Naive thymus-derived CD4-positive, alpha-beta T cell (primary cell): ENCODE measurements at regions of chr10 and their contacts with region 1.

Region 1: DNA sequence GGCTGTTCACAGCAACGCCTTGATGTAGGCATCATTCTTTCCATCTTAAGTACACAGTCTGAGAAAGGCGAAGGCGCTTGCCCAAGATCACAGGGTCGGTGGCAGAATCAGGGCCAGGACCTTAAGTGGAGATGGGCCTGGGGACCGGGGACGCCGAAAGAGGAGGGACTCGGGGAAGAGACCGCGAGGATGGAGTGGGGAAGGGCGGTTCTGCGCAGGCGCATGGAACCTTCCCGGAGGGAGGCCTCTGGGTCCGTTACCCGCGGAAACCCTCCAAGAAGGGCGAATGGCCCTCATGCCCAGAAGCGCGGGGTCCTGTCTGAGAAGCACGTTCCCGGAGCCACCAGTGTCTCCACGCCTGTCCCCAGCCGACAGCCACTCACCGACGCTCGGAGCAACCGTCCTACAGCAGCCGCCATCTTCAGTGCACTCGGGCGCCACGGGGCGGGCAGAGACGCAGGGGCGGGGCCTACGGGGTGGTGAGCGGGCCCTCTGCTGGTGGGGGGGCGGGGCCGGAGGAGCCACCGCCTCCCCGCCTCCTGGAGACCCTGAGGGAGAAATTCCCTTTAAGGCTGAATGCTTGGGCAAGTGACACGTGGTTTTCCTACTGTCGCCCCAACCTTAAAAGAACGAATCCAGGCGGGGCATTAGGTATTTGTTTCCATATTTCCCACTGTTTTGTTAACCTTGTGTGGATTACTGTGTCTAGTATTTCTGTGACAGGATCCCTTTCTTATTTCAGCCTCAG is at the start of gene PRDX3:
- DNase-seq: peak; percentile 81 to 96 (median 89)
- ATAC-seq: peak; percentile 100
- H3K4me3 ChIP-seq: peak within 1 kb of the TSS; percentile 97
- H3K4me3 Mint-ChIP-seq: peak within 1 kb of the TSS; percentile 91 to 99 (median 96)
- H3K27ac ChIP-seq: peak within 1 kb of the TSS; percentile 79
- H3K27ac Mint-ChIP-seq: peak within 1 kb of the TSS; percentile 86 to 98 (median 93)
- H3K4me1 ChIP-seq: peaks cover 7 to 13% of the 10 kb centered on the region in 2 donors
- H3K4me1 Mint-ChIP-seq: peaks cover 13 to 48% (median 36%) of the 10 kb centered on the region in 7 donors
- H3K27me3 ChIP-seq: no peaks in the 10 kb centered on the region
- H3K27me3 Mint-ChIP-seq: no peaks in the 10 kb centered on the region
- total RNA-seq, gene PRDX3: 11.7 to 120 (median 35.4) TPM

Region 2: GRCh38 chr10:119090968-119091367 is 87.6 kb before region 1 on chr10:
- CTCF ChIA-PET with region 1: no interaction called
- POLR2A ChIA-PET with region 1: no interaction called
- intact Hi-C with region 1: no loop called
- DNase-seq: peak in 7 of 9 donors; percentile 39 to 71 (median 48)
- ATAC-seq: peak; percentile 95
- H3K4me3 ChIP-seq: peak overlapping the region; percentile 3
- H3K4me3 Mint-ChIP-seq: peak overlapping the region; percentile 47 to 77 (median 67)
- H3K27ac ChIP-seq: peak overlapping the region; percentile 58
- H3K27ac Mint-ChIP-seq: peak overlapping the region; percentile 76 to 96 (median 93)
- H3K4me1 ChIP-seq: peaks cover 22 to 43% of the 10 kb centered on the region in 2 donors
- H3K4me1 Mint-ChIP-seq: peaks cover 23 to 53% (median 31%) of the 10 kb centered on the region in 7 donors
- H3K27me3 ChIP-seq: no peaks in the 10 kb centered on the region
- H3K27me3 Mint-ChIP-seq: no peaks in the 10 kb centered on the region

Region 3: GRCh38 chr10:119103903-119104652 is 74.5 kb before region 1 on chr10 and contains the start of gene DENND10:
- CTCF ChIA-PET with region 1: no interaction called
- POLR2A ChIA-PET with region 1: no interaction called
- intact Hi-C with region 1: loop called (anchors 1 kb)
- DNase-seq: peak; percentile 18 to 80 (median 51)
- ATAC-seq: peak; percentile 93
- H3K4me3 ChIP-seq: peak within 1 kb of the TSS; percentile 45
- H3K4me3 Mint-ChIP-seq: peak within 1 kb of the TSS; percentile 65 to 94 (median 85)
- H3K27ac ChIP-seq: peak within 1 kb of the TSS; percentile 69
- H3K27ac Mint-ChIP-seq: peak within 1 kb of the TSS; percentile 62 to 96 (median 84)
- H3K4me1 ChIP-seq: peaks cover 6 to 20% of the 10 kb centered on the region in 2 donors
- H3K4me1 Mint-ChIP-seq: peaks cover 5 to 35% (median 14%) of the 10 kb centered on the region in 7 donors
- H3K27me3 ChIP-seq: no peaks in the 10 kb centered on the region
- H3K27me3 Mint-ChIP-seq: no peaks in the 10 kb centered on the region
- total RNA-seq, gene DENND10: 22.1 to 41.7 (median 28.8) TPM

Region 4: GRCh38 chr10:119165171-119166110 is 13.1 kb before region 1 on chr10 and contains the start of gene SFXN4:
- CTCF ChIA-PET with region 1: no interaction called
- POLR2A ChIA-PET with region 1: interaction called, 6 read pairs
- intact Hi-C with region 1: loop called (anchors 1 kb)
- DNase-seq: peak; percentile 72 to 87 (median 84)
- ATAC-seq: peak; percentile 98
- H3K4me3 ChIP-seq: peak within 1 kb of the TSS; percentile 95
- H3K4me3 Mint-ChIP-seq: peak within 1 kb of the TSS; percentile 89 to 95 (median 92)
- H3K27ac ChIP-seq: peak within 1 kb of the TSS; percentile 88
- H3K27ac Mint-ChIP-seq: peak within 1 kb of the TSS; percentile 85 to 98 (median 95)
- H3K4me1 ChIP-seq: peaks cover 12 to 15% of the 10 kb centered on the region in 2 donors
- H3K4me1 Mint-ChIP-seq: peaks cover 22 to 39% (median 32%) of the 10 kb centered on the region in 7 donors
- H3K27me3 ChIP-seq: no peaks in the 10 kb centered on the region
- H3K27me3 Mint-ChIP-seq: no peaks in the 10 kb centered on the region
- total RNA-seq, gene SFXN4: 11.8 to 28.1 (median 23.1) TPM

Region 5: DNA sequence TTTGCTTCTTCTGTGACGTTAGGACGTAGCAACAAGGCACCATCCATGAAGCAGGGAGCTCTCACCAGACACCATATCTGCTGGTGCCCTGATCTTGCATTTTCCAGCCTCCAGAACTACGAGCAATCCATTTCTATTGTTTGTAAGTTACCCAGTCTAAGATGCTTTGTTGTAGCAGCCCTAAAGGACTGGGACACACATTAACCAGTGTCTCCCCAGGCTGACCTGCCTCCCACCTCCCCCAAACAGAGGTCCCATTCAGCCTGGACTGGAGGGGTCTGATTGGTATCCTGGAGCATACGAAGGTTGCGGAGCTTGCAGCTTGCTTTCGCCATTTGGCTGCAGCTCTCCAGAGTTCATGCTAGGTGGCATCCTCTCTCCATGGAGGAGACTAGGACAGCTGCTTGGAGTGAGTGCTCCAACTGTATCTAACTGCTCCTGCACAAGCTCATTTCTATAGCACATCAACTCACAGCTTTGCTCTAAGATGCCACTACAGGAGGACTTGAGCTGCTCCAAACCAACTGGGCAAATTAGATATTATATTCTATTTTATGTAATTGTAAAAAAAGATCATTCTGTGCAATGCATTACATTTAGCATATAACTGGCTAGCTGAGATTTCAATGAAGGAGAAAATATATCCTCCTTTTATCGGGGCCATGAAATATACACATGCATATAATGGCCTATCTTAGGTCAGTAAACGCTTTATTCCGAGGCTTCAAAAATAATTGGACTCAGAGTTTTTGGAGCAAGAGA is 20.9 kb after region 1 on chr10:
- CTCF ChIA-PET with region 1: interaction called, 9 read pairs
- POLR2A ChIA-PET with region 1: interaction called, 4 read pairs
- intact Hi-C with region 1: loop called in 1 of 2 experiments (anchors 2 kb)
- DNase-seq: peak in 8 of 9 donors; percentile 42 to 72 (median 58)
- ATAC-seq: peak; percentile 93
- H3K4me3 ChIP-seq: no peak overlapping the region
- H3K4me3 Mint-ChIP-seq: peak overlapping the region in 1 of 10 donors; percentile 35
- H3K27ac ChIP-seq: no peak overlapping the region
- H3K27ac Mint-ChIP-seq: peak overlapping the region in 3 of 9 donors; percentile 46 to 73 (median 56)
- H3K4me1 ChIP-seq: no peaks in the 10 kb centered on the region
- H3K4me1 Mint-ChIP-seq: peaks cover 4 to 30% (median 9%) of the 10 kb centered on the region in 7 donors
- H3K27me3 ChIP-seq: no peaks in the 10 kb centered on the region
- H3K27me3 Mint-ChIP-seq: peaks cover 0 to 5% (median 0%) of the 10 kb centered on the region in 5 donors

Region 6: DNA sequence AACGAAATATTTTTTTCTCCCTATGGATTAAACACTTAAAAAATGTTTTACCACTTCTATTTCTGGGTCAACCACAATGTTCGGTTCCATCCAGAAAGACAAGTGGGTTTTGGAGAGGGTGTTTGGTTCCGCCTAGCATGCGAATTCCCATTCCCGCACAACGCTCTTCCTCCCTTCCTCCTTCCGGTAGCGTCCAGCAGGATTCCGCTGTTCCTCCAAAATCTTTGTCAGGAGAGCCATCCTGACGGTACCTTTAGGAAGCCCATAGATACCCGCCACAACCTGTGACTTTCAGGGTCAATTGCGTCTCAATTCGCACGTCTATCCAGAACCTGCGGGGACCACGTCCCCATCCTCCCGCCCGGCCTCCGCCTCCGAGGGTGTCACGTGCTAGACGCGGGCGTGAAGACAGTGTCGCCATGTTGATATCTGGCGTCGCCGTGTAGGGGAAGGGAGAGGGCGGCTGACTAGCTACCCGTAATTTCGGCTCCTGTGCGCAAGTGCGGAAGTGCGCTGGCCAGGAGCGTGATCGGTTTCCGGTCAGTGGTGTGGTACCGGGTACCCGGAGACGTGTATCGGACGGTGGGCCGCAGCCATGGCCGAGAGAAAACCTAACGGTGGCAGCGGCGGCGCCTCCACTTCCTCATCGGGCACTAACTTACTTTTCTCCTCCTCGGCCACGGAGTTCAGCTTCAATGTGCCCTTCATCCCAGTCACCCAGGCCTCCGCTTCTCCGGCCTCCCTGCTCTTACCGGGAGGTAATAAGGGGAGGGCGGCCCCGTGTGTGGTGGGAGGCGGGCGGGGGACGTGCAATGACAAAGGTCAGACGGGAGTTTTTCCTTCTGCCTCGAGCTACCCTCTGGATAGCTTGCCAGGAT is 713.9 kb after region 1 on chr10 and contains the start of gene SEC23IP:
- CTCF ChIA-PET with region 1: no interaction called
- POLR2A ChIA-PET with region 1: no interaction called
- intact Hi-C with region 1: loop called in 1 of 2 experiments (anchors 1 kb)
- DNase-seq: peak; percentile 77 to 94 (median 83)
- ATAC-seq: peak; percentile 99
- H3K4me3 ChIP-seq: peak within 1 kb of the TSS; percentile 95
- H3K4me3 Mint-ChIP-seq: peak within 1 kb of the TSS; percentile 92 to 100 (median 98)
- H3K27ac ChIP-seq: peak within 1 kb of the TSS; percentile 89
- H3K27ac Mint-ChIP-seq: peak within 1 kb of the TSS; percentile 95 to 99 (median 98)
- H3K4me1 ChIP-seq: peaks cover 12 to 21% of the 10 kb centered on the region in 2 donors
- H3K4me1 Mint-ChIP-seq: peaks cover 40 to 53% (median 48%) of the 10 kb centered on the region in 7 donors
- H3K27me3 ChIP-seq: no peaks in the 10 kb centered on the region
- H3K27me3 Mint-ChIP-seq: peaks cover 0 to 4% (median 0%) of the 10 kb centered on the region in 5 donors
- total RNA-seq, gene SEC23IP: 34.8 to 68.3 (median 54.4) TPM